A673 (cell line): ENCODE measurements at regions of chr14 and their contacts with region 1.

Region 1: DNA sequence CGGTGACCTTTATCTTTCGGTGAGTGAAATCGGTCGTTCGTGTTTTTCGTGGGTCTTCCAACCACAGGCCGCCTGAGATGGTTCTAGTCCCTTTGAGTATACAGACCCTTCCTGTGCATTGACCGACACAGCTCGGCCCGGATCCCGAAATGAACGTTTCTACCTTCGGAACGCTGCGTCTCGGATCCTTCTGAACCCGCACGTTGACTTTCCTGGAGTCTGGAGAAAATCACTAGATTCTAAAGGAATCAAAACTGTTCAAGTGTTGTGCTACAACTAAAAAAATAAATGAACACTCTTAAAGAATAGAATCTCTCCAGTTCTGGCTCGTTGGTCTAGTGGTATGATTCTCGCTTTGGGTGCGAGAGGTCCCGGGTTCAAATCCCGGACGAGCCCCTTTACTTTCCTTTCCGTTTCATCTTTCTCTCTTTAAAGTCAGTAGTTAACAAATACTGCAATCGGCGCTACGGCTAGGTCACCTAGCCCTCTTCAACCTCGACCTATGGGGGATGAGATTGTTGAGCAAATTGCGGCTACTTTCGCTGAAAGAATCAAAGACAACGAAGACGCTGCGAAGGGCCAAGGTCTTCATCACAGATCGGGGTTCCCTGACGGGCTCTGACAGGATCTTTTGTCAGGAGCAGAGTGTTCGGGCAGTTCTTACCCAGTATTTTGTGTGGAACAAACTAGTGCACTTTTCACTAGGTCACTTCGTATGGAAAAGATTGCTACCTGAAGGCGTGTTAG is 8.6 kb downstream of the OR6S1 start:
- DNase-seq: peak; percentile 96
- H3K4me3 ChIP-seq: peak overlapping the region; percentile 58
- H3K27ac ChIP-seq: no peak overlapping the region
- H3K4me1 ChIP-seq: peaks cover 7% of the 10 kb centered on the region
- H3K27me3 ChIP-seq: peaks cover 6% of the 10 kb centered on the region
- CTCF ChIP-seq: no peak

Region 2: DNA sequence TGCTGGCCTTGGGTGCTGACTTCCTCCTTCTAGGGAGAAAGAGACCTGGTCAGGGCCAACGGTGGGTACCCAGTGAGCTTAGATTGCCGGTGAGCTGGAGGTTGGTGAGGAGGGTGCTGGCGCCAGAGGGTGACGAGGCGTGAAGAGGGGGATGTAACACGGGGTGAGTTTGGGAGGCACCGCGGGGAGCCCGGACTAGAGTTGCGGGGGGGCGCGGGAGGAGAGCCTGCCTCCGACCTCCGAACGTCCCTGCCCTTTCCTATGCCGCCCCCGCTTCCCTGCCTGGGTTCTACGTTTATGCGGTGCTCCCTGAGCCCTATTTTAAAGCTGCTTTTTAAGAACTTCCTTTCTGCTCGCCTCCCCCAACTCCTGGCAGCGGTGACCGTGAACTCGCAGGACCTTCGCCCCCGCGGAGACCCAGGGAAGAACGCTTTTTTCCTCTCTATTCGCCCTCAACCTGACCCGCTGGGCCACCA is 10.0 kb before region 1 on chr14:
- CTCF ChIA-PET with region 1: interaction called, 11 read pairs
- POLR2A ChIA-PET with region 1: no interaction called
- intact Hi-C with region 1: no loop called
- DNase-seq: no peak
- H3K4me3 ChIP-seq: no peak overlapping the region
- H3K27ac ChIP-seq: no peak overlapping the region
- H3K4me1 ChIP-seq: peaks cover 3% of the 10 kb centered on the region
- H3K27me3 ChIP-seq: no peaks in the 10 kb centered on the region
- CTCF ChIP-seq: no peak